IMR-90 (cell line): ENCODE measurements at regions of chr12 and their contacts with region 1.

Region 1: GRCh38 chr12:1758887-1759286 is 61.5 kb upstream of the LRTM2 start:
- DNase-seq: peak; percentile 54
- ATAC-seq: peak; percentile 61
- H3K4me3 ChIP-seq: no peak overlapping the region
- H3K27ac ChIP-seq: peak overlapping the region; percentile 34; the same call in 1 of the 2 replicates
- H3K4me1 ChIP-seq: peaks cover 2% of the 10 kb centered on the region
- H3K27me3 ChIP-seq: no peaks in the 10 kb centered on the region
- CTCF ChIP-seq: no peak
- POLR2A ChIP-seq: no peak
- RAD21 ChIP-seq: no peak

Region 2: GRCh38 chr12:1720494-1720893 is 38.4 kb before region 1 on chr12:
- CTCF ChIA-PET with region 1: no interaction called
- POLR2A ChIA-PET with region 1: no interaction called
- dilution Hi-C with region 1: no loop called
- in situ Hi-C with region 1: no loop called
- intact Hi-C with region 1: loop called (anchors 5 kb)
- DNase-seq: no peak
- ATAC-seq: no peak
- H3K4me3 ChIP-seq: no peak overlapping the region
- H3K27ac ChIP-seq: no peak overlapping the region
- H3K4me1 ChIP-seq: peaks cover 2% of the 10 kb centered on the region; the same call in 1 of the 2 replicates
- H3K27me3 ChIP-seq: no peaks in the 10 kb centered on the region
- CTCF ChIP-seq: no peak
- POLR2A ChIP-seq: no peak
- RAD21 ChIP-seq: no peak

Region 3: GRCh38 chr12:1773937-1774655 is 15.2 kb after region 1 on chr12:
- CTCF ChIA-PET with region 1: no interaction called
- POLR2A ChIA-PET with region 1: no interaction called
- dilution Hi-C with region 1: no loop called
- in situ Hi-C with region 1: no loop called
- intact Hi-C with region 1: no loop called
- DNase-seq: peak; percentile 11
- ATAC-seq: peak; percentile 40; the same call in 1 of the 2 replicates
- H3K4me3 ChIP-seq: no peak overlapping the region
- H3K27ac ChIP-seq: no peak overlapping the region
- H3K4me1 ChIP-seq: peaks cover 18% of the 10 kb centered on the region
- H3K27me3 ChIP-seq: no peaks in the 10 kb centered on the region
- CTCF ChIP-seq: no peak
- POLR2A ChIP-seq: no peak
- RAD21 ChIP-seq: no peak

Region 4: GRCh38 chr12:2023365-2023764 is 264.5 kb after region 1 on chr12:
- CTCF ChIA-PET with region 1: no interaction called
- POLR2A ChIA-PET with region 1: no interaction called
- dilution Hi-C with region 1: no loop called
- in situ Hi-C with region 1: no loop called
- intact Hi-C with region 1: no loop called
- DNase-seq: no peak
- ATAC-seq: no peak
- H3K4me3 ChIP-seq: no peak overlapping the region
- H3K27ac ChIP-seq: no peak overlapping the region
- H3K4me1 ChIP-seq: no peaks in the 10 kb centered on the region
- H3K27me3 ChIP-seq: peaks cover 38% of the 10 kb centered on the region
- CTCF ChIP-seq: no peak
- POLR2A ChIP-seq: no peak
- RAD21 ChIP-seq: no peak